Activated CD4-positive, alpha-beta memory T cell treated with anti-CD3 and anti-CD28 coated beads for 36 hours (primary cell): ENCODE measurements at regions of chr15 and their contacts with region 1.

Region 1: GRCh38 chr15:79004336-79004735 is 59.5 kb upstream of the CTSH start:
- DNase-seq: peak; percentile 26
- H3K4me3 Mint-ChIP-seq: no peak overlapping the region
- H3K27ac Mint-ChIP-seq: no peak overlapping the region
- H3K4me1 Mint-ChIP-seq: peaks cover 8% of the 10 kb centered on the region
- H3K27me3 Mint-ChIP-seq: no peaks in the 10 kb centered on the region

Region 2: DNA sequence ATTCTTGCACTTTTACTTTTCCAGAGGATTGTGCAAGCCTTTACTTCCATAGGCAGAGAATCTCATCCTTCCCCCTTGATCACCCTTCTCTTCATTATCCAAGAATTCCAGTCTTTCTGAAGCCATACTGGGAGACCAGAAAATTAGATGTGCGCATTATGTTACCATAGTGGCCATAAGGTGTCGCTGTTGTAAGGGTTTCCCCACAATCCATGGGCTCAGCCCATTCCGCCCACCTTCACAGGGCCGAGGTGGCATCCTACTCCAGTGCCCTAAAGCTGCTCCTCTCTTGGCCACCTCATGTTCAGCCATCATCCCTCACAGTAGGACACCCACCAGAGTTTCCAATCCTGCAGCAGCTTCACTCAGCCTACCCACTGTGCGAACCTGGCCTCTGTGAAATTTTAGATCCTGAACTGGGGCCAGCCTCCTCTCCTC is 94.5 kb before region 1 on chr15:
- CTCF ChIA-PET with region 1: interaction called, 21 read pairs
- POLR2A ChIA-PET with region 1: no interaction called
- intact Hi-C with region 1: no loop called
- DNase-seq: peak; percentile 47
- H3K4me3 Mint-ChIP-seq: no peak overlapping the region
- H3K27ac Mint-ChIP-seq: peak overlapping the region; percentile 53
- H3K4me1 Mint-ChIP-seq: peaks cover 23% of the 10 kb centered on the region
- H3K27me3 Mint-ChIP-seq: no peaks in the 10 kb centered on the region

Region 3: DNA sequence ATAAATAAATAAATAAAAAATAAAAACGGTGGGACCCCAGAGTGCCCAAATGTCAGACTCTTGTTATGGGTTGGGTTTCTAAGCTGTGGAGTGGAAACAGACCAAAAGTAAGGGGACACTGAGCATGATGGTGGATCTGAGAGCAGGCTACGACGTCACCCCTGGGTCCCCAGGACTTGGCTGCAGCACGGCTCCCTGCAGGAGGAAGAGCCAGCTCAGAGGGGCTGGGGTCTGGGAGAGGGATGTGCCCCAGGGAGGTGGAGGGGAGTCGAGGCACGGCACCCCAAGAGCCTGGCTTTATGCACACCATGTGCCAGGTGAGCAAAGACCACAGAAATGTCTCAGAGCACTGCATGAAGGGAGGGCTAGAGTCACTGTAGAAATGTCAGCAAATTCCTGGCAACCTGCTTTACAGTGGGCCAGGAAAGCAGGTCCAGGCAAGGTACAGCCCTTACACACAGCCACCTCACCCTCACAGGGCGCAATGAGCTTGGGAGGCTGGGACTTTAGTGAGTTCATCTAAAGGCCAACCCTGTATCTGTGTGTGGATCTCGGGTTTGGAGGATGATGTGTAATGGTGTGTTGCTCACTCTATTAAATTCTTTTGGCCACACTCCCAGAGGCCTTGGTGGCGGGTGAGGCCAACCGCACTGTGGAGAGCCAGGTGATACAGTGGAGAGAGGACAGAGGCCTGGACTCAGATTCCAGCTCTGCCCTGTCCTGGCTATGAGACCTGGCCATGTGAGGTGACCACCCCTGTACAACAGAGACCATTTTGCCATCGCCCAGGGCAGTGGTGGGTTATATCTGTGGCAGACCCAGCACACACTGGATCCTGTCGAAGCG is 73.6 kb before region 1 on chr15:
- CTCF ChIA-PET with region 1: no interaction called
- POLR2A ChIA-PET with region 1: no interaction called
- intact Hi-C with region 1: loop called (anchors 10 kb)
- DNase-seq: no peak
- H3K4me3 Mint-ChIP-seq: no peak overlapping the region
- H3K27ac Mint-ChIP-seq: no peak overlapping the region
- H3K4me1 Mint-ChIP-seq: peaks cover 2% of the 10 kb centered on the region
- H3K27me3 Mint-ChIP-seq: no peaks in the 10 kb centered on the region